ENCODE measurements at regions of chr12 and their contacts with region 1.

Region 1: DNA sequence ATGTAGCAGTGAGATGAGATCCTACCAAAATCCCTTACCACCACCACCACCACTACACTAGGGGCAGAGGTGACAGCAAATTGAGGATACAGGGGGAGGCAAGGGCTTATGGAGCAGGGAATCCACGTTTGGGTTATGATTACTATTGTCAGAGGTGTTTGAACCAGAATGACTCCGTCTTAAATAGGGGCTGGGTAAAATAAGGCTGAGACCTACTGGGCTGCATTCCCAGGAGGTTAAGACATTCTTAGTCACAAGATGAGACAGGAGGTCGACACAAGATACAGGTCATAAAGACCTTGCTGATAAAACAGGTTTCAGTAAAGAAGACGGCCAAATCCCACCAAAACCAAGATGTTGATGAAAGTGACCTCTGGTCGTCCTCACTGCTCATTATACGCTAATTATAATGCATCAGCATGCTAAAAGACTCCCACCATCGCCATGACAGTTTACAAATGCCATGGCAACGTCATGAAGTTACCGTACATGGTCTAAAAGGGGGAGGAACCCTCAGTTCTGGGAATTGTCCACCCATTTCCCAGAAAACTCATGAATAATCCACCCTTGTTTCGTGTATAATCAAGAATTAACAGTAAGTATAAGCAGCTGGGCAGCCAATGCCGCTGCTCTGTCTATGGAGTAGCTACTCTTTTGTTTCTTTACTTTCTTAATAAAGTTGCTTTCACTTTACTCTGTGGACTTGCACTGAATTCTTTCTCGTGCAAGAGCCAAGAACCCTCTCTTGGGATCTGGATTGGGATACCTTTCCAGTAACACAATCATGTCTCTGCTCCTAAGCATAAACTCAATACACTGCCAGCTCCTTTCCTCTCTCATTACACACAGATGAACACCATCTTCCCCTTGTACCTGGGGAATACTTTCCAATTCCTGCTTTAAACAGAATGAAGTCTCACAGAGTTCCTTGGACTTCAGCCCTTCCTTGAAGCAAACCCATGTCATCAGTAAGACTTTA is 16.7 kb upstream of the CRY1 start:
- DNase-seq: no peak
- ATAC-seq: no peak
- H3K4me3 ChIP-seq: no peak overlapping the region
- H3K27ac ChIP-seq: no peak overlapping the region
- H3K4me1 ChIP-seq: no peaks in the 10 kb centered on the region
- H3K27me3 ChIP-seq: peaks cover 0 to 3% of the 10 kb centered on the region in 2 experiments; a peak in 1 of 4 replicates
- CTCF ChIP-seq: no peak
- EP300 ChIP-seq: no peak
- POLR2A ChIP-seq: no peak
- RAD21 ChIP-seq: no peak

Region 2: GRCh38 chr12:106386813-106387535 is 723.1 kb before region 1 on chr12:
- CTCF ChIA-PET with region 1: interaction called, 3 read pairs
- POLR2A ChIA-PET with region 1: no interaction called
- RAD21 ChIA-PET with region 1: interaction called, 3 read pairs
- SMC1A ChIA-PET with region 1: no interaction called
- in situ Hi-C with region 1: loop called (anchors 10 kb)
- intact Hi-C with region 1: no loop called
- DNase-seq: no peak
- ATAC-seq: no peak
- H3K4me3 ChIP-seq: no peak overlapping the region
- H3K27ac ChIP-seq: no peak overlapping the region
- H3K4me1 ChIP-seq: no peaks in the 10 kb centered on the region
- H3K27me3 ChIP-seq: no peaks in the 10 kb centered on the region
- CTCF ChIP-seq: no peak
- EP300 ChIP-seq: no peak
- POLR2A ChIP-seq: no peak
- RAD21 ChIP-seq: no peak

Region 3: GRCh38 chr12:107079172-107080011 is 30.6 kb before region 1 on chr12:
- CTCF ChIA-PET with region 1: interaction called, 11 read pairs
- POLR2A ChIA-PET with region 1: no interaction called
- RAD21 ChIA-PET with region 1: no interaction called
- SMC1A ChIA-PET with region 1: interaction called, 6 read pairs
- in situ Hi-C with region 1: no loop called
- intact Hi-C with region 1: no loop called
- DNase-seq: no peak
- ATAC-seq: peak; percentile 78
- H3K4me3 ChIP-seq: no peak overlapping the region
- H3K27ac ChIP-seq: no peak overlapping the region
- H3K4me1 ChIP-seq: no peaks in the 10 kb centered on the region
- H3K27me3 ChIP-seq: no peaks in the 10 kb centered on the region; a peak in 1 of 4 replicates
- CTCF ChIP-seq: peak; percentile 52 to 66 (median 58)
- EP300 ChIP-seq: no peak
- POLR2A ChIP-seq: no peak
- RAD21 ChIP-seq: peak; percentile 36

Region 4: DNA sequence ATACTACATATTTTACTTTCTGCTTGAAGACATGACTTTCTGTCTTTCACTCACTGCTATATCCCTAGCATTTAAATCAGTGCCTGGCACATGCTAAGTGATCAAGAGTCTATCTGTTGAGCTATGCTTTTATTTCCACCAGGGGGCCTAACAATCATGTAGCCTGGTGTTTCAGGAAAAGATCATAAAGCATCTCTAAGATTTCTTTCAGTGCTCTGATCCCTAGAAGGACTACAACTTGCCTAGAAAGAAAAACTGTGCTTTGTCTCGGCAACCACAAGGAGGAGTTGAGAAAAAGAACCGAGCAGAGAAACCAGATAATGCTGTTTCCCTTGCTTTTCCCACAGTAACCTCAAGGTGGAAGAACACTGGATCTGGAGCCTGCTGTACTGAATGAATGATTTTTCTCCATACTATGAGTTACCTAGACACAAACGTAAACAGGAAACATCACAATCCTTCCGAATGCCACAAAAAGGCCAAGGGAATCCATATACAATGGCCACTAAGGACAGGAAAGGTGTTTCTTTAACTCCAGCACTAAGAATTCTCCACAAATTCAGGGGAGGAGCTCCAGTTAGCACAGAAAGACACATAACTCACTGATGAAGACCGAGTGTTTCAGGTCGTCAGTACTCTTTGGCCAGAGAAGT is 17.9 kb before region 1 on chr12:
- CTCF ChIA-PET with region 1: interaction called, 41 read pairs
- POLR2A ChIA-PET with region 1: no interaction called
- RAD21 ChIA-PET with region 1: interaction called, 4 read pairs
- SMC1A ChIA-PET with region 1: no interaction called
- in situ Hi-C with region 1: no loop called
- intact Hi-C with region 1: no loop called
- DNase-seq: peak; percentile 21
- ATAC-seq: peak; percentile 43
- H3K4me3 ChIP-seq: peak overlapping the region; percentile 74
- H3K27ac ChIP-seq: no peak overlapping the region
- H3K4me1 ChIP-seq: no peaks in the 10 kb centered on the region
- H3K27me3 ChIP-seq: peaks cover 0 to 2% of the 10 kb centered on the region in 2 experiments; a peak in 1 of 4 replicates
- CTCF ChIP-seq: peak; percentile 32 to 69 (median 42); a peak in 5 of 6 replicates
- EP300 ChIP-seq: no peak
- POLR2A ChIP-seq: no peak
- RAD21 ChIP-seq: peak; percentile 37